ENCODE measurements at regions of chr20 and their contacts with region 1.

Region 1: GRCh38 chr20:5608442-5609161 is 141.6 kb upstream of the SHLD1 start:
- DNase-seq: peak; percentile 32
- ATAC-seq: no peak
- H3K4me3 ChIP-seq: peak overlapping the region; percentile 70 to 98 (median 85)
- H3K4me3 Mint-ChIP-seq: peak overlapping the region; percentile 97
- H3K27ac ChIP-seq: peak overlapping the region; percentile 93 to 95
- H3K27ac Mint-ChIP-seq: peak overlapping the region; percentile 82
- H3K4me1 ChIP-seq: peaks cover 57% of the 10 kb centered on the region in 2 donors
- H3K4me1 Mint-ChIP-seq: peaks cover 58% of the 10 kb centered on the region
- H3K27me3 ChIP-seq: no peaks in the 10 kb centered on the region
- H3K27me3 Mint-ChIP-seq: no peaks in the 10 kb centered on the region
- CTCF ChIP-seq: no peak

Region 2: GRCh38 chr20:5586720-5587119 is 21.9 kb before region 1 on chr20:
- CTCF ChIA-PET with region 1: interaction called, 8 read pairs
- POLR2A ChIA-PET with region 1: interaction called, 11 read pairs
- intact Hi-C with region 1: no loop called
- DNase-seq: peak; percentile 64
- ATAC-seq: peak; percentile 71
- H3K4me3 ChIP-seq: no peak overlapping the region
- H3K4me3 Mint-ChIP-seq: peak overlapping the region; percentile 48
- H3K27ac ChIP-seq: peak overlapping the region in 1 of 2 donors; percentile 59
- H3K27ac Mint-ChIP-seq: peak overlapping the region; percentile 82
- H3K4me1 ChIP-seq: peaks cover 14 to 29% of the 10 kb centered on the region in 2 donors
- H3K4me1 Mint-ChIP-seq: peaks cover 33% of the 10 kb centered on the region
- H3K27me3 ChIP-seq: no peaks in the 10 kb centered on the region
- H3K27me3 Mint-ChIP-seq: no peaks in the 10 kb centered on the region
- CTCF ChIP-seq: no peak

Region 3: DNA sequence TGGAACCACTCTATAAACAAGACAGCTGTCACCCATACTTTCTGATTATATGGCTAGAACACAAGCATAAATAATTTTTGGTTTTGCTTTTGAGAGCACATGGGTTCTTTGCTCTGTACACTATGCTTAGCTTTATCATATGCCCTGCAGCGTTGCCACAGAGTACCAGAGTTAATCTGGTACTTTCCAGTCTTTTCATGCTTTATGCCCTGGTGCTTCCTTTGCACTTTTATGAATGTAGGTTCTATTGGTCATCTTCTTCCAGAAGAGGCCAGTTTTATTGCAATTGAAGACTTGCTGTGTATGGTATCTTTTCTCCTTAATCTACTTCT is 162.4 kb after region 1 on chr20:
- CTCF ChIA-PET with region 1: interaction called, 3 read pairs
- POLR2A ChIA-PET with region 1: no interaction called
- intact Hi-C with region 1: loop called (anchors 5 kb)
- DNase-seq: peak; percentile 60
- ATAC-seq: peak; percentile 72
- H3K4me3 ChIP-seq: peak overlapping the region in 1 of 5 experiments; percentile 26
- H3K4me3 Mint-ChIP-seq: peak overlapping the region; percentile 65
- H3K27ac ChIP-seq: peak overlapping the region; percentile 45 to 79
- H3K27ac Mint-ChIP-seq: peak overlapping the region; percentile 89
- H3K4me1 ChIP-seq: peaks cover 50 to 57% of the 10 kb centered on the region in 2 donors
- H3K4me1 Mint-ChIP-seq: peaks cover 67% of the 10 kb centered on the region
- H3K27me3 ChIP-seq: no peaks in the 10 kb centered on the region
- H3K27me3 Mint-ChIP-seq: no peaks in the 10 kb centered on the region
- CTCF ChIP-seq: no peak